Panc1 (cell line): ENCODE measurements at regions of chr2 and their contacts with region 1.

Region 1: DNA sequence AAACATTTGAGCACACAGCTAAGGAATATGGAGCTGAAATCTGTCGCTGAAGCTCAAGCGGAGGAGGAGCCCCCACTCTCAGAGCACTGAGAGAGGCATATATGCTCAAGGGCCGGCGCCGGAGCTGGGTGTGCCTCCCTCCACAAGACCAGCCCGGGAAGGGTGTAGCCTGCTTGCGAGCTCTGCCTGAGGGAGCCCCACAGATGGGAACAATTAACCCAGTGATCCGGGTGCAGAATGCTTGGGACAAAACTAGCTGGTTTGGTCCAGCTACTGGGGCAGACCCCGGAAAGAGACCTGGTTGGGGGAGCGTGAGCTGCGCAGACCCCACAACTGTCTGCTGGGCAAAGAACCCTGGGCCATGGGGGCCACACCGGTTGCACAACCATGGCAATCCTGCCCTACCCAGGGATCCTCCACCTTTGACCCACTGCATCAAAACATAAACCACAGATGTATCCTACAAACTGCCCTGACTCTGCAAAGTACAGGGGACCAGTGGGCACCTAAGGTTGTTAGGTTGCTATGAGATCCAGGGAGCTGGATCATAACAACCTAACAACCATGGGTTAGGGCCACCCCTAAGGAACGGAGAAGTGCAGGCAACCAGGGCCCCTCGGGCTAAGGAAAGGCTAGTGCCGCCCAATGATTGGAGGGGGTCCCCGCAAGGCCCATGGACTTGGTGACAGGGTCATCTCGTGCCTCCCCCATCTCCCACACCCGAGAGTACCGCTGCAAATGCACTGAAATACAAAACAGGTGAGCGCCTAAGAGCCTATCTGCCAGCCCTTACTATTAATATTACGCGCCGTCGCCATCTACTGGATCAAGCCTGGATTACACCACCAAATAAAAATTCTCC is 53.4 kb upstream of the SCN1A start:
- DNase-seq: peak; percentile 15
- ATAC-seq: peak; percentile 82
- H3K4me3 ChIP-seq: no peak overlapping the region
- H3K27ac ChIP-seq: no peak overlapping the region
- H3K4me1 ChIP-seq: no peaks in the 10 kb centered on the region
- H3K27me3 ChIP-seq: no peaks in the 10 kb centered on the region
- CTCF ChIP-seq: peak; percentile 82

Region 2: DNA sequence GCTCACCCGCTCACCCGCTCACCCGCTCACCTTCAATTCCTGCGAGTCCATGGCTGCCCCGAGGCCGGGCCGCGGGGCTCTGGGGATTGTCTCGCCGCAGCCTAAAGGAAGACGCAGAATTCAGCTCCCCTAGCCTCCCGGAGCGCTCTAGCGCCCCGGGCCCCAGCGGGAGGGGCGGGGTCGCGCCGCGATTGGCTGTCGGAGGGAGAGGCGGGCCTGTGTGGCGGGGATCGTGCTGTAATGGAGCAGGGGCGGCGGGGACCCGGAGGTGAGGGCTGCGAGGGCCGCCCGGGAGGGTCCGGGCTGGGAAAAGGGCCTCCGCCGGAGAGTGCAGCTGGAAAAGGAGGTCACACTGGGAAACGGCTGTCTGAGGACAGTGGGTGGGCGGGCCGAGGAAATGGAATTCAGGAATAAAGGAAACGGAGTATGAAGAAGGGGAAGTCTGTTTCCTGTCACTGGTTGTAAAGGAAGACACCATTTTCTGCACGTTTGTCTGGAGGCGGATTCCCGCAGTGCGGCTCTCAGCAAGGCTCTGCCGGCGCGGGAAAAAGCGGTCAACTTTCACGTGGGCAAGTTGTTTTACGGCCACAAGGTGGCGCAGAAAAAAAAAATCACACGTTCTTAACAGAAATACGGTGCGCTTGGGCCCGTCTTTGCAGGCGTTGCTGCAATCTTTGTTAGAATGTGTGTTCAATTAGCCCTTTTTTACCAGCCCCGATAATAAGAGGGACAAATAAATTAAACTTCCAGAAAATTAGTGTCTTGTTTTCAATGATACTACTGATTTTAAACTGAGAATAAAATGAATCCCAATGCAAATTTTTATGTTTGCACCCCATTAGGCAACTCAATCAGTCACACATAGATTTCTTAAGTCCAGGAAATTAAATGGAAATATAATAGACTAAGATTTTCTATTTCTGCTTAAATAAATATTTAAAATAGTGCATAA is 227.3 kb before region 1 on chr2 and contains the start of gene TTC21B:
- CTCF ChIA-PET with region 1: no interaction called
- POLR2A ChIA-PET with region 1: no interaction called
- in situ Hi-C with region 1: no loop called
- intact Hi-C with region 1: loop called (anchors 5 kb)
- DNase-seq: peak; percentile 75
- ATAC-seq: peak; percentile 99
- H3K4me3 ChIP-seq: peak within 1 kb of the TSS; percentile 74 to 85
- H3K27ac ChIP-seq: peak within 1 kb of the TSS; percentile 75
- H3K4me1 ChIP-seq: peaks cover 15% of the 10 kb centered on the region
- H3K27me3 ChIP-seq: no peaks in the 10 kb centered on the region
- CTCF ChIP-seq: peak; percentile 82
- total RNA-seq, gene TTC21B: 12.4 TPM

Region 3: DNA sequence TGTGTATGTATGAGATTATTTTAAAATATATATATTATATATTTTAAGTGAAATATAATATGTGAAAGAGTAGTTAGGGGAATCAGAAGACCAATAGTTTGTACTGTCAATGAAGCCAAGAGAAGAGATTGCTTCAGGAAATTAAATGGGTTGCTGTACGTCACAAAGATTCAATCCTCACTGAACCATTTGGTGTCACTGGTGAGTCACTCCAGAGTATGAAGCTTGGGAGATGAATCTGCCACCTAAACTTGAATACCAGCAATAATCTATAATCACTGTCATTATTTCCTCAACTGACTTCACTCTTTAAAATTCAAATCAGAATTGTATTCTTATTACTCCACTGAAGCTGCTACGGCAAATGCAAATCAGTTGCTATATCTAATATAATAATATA is 236.5 kb after region 1 on chr2:
- CTCF ChIA-PET with region 1: no interaction called
- POLR2A ChIA-PET with region 1: no interaction called
- in situ Hi-C with region 1: no loop called
- intact Hi-C with region 1: loop called (anchors 5 kb)
- DNase-seq: no peak
- ATAC-seq: no peak
- H3K4me3 ChIP-seq: no peak overlapping the region
- H3K27ac ChIP-seq: no peak overlapping the region
- H3K4me1 ChIP-seq: no peaks in the 10 kb centered on the region
- H3K27me3 ChIP-seq: no peaks in the 10 kb centered on the region
- CTCF ChIP-seq: peak; percentile 22; the same call in 1 of the 2 replicates